H1 (cell line): ENCODE measurements at regions of chr4 and their contacts with region 1.

Region 1: GRCh38 chr4:5399790-5400421 is 308.5 kb downstream of the EVC2 start:
- DNase-seq: peak in 1 of 2 experiments; percentile 49
- H3K4me3 ChIP-seq: no peak overlapping the region
- H3K27ac ChIP-seq: no peak overlapping the region
- H3K4me1 ChIP-seq: no peaks in the 10 kb centered on the region
- H3K27me3 ChIP-seq: no peaks in the 10 kb centered on the region
- CTCF ChIP-seq: peak; percentile 65 to 82 (median 81)
- EP300 ChIP-seq: no peak
- POLR2A ChIP-seq: no peak
- RAD21 ChIP-seq: peak; percentile 65 to 74

Region 2: GRCh38 chr4:5385741-5386311 is 14.1 kb before region 1 on chr4:
- CTCF ChIA-PET with region 1: interaction called, 32 read pairs
- POLR2A ChIA-PET with region 1: no interaction called
- DNase-seq: no peak
- H3K4me3 ChIP-seq: no peak overlapping the region
- H3K27ac ChIP-seq: no peak overlapping the region
- H3K4me1 ChIP-seq: no peaks in the 10 kb centered on the region
- H3K27me3 ChIP-seq: no peaks in the 10 kb centered on the region
- CTCF ChIP-seq: no peak
- EP300 ChIP-seq: no peak
- POLR2A ChIP-seq: no peak
- RAD21 ChIP-seq: no peak

Region 3: DNA sequence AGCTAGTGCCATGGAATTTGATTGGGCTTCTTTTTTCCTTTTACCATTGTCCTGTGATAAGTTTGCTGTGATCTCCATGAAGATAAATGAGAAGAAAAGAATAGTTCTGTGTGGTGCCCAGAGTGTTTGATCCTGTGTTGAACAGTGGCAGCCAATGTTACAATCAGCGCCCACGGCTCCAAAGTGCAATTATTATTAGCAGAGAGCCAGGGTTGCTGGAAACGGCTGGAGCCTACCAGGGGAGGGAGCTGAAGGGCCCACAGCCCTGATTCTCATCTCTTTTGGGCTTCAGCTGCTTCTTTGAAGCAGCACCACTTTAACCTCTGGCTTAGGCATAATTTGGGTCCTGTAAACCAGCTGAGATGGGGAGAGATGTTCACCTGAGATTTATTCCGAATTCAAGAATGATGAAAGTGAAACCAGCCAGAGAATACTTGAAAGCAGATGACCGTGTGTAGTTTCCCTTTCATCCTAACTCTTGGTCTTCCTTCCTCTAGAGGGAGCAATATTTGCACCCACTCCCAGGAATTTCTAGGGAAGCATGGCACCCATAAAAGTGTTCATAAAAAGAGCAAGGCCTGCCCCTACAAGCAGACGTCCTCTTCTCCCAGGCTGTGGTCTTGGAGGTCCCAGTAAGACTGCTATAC is 10.2 kb after region 1 on chr4:
- CTCF ChIA-PET with region 1: interaction called, 44 read pairs
- POLR2A ChIA-PET with region 1: no interaction called
- DNase-seq: no peak
- H3K4me3 ChIP-seq: no peak overlapping the region
- H3K27ac ChIP-seq: no peak overlapping the region
- H3K4me1 ChIP-seq: no peaks in the 10 kb centered on the region
- H3K27me3 ChIP-seq: no peaks in the 10 kb centered on the region
- CTCF ChIP-seq: peak; percentile 28 to 44 (median 28)
- EP300 ChIP-seq: no peak
- POLR2A ChIP-seq: no peak
- RAD21 ChIP-seq: peak; percentile 23 to 35; a peak in 3 of 4 replicates

Region 4: DNA sequence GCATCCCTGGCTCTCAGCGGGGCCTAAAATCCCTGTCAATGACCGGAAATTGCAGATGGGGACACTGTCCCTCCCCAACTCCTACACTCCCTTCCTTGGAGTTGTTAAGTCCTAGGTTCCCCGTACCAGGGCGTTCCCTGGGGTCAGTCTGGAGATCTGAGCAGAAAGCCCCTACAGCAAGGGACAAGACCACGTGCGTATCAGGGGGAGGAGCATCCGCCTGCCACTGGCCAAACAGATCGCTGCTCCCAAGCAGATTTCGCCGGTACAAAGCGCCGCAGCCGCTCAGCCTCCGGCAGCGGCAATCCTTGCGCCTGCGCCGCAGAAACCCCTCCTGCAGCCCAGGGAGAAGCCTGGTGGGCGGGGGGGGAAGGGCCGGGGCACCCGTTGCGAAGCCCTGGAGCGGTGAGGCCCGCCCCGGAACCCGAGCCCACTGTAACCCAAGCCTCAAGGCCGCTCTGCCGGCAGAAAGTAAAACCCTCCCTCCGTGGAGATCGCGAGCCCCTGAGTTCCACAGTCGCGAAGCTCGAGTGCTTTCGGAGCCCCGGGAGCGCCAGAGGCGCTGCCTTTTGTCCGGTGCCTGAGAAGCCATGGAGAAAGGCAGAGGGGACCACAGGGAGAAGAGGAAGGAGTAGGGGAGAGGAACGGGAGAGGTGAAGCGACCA is 490.3 kb after region 1 on chr4:
- CTCF ChIA-PET with region 1: no interaction called
- POLR2A ChIA-PET with region 1: no interaction called
- DNase-seq: peak; percentile 87 to 90
- H3K4me3 ChIP-seq: peak overlapping the region; percentile 28 to 70 (median 56)
- H3K27ac ChIP-seq: no peak overlapping the region
- H3K4me1 ChIP-seq: peaks cover 17 to 38% (median 30%) of the 10 kb centered on the region in 4 experiments
- H3K27me3 ChIP-seq: peaks cover 27 to 56% (median 51%) of the 10 kb centered on the region in 4 experiments
- CTCF ChIP-seq: no peak
- EP300 ChIP-seq: no peak
- POLR2A ChIP-seq: no peak
- RAD21 ChIP-seq: no peak